PC-9 (cell line): ENCODE measurements at regions of chr15 and their contacts with region 1.

Region 1: DNA sequence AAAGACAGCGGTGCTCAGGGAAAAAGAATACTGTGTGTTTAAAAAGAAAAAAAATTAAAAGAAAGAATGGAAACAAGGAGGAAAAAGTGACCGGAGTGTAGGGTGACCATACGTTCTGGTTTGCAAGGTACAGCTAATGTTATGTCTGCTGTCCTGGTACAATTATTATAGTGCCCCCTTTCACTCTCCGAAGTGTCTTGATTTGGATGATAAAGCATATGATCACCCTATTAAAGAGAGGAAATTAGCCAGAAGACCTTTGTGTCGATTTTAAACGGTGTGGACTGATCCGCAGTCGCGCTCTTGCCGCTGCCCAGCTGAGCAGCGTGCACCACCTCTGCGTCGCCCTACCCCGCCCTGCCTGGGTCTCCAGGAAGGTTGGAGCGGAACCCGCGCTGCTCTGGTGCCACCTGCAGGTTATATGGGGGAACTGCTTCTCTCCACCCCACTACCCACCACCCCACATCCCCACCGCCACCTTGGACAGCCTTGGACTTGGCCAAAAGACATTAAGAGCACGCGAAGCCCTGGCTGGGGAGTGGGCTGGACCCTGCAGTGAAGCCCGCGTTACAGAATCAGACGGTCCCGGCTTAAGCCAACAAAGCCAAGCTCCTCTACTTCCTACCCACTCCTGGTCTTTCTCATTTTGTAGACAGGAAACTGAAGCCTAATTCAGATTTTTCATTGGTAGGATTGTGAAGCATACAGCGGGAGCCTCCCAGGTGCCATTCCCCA is 41.2 kb upstream of the UBE2Q2 start:
- DNase-seq: peak in 1 of 2 experiments; percentile 78
- H3K4me3 ChIP-seq: peak overlapping the region; percentile 23; the same call in 1 of the 2 replicates
- H3K27ac ChIP-seq: no peak overlapping the region
- H3K4me1 ChIP-seq: peaks cover 5% of the 10 kb centered on the region; the same call in 1 of the 2 replicates
- H3K27me3 ChIP-seq: peaks cover 30% of the 10 kb centered on the region
- CTCF ChIP-seq: peak; percentile 82

Region 2: GRCh38 chr15:74873036-74873755 is 928.8 kb before region 1 on chr15 and contains the start of gene SCAMP2:
- CTCF ChIA-PET with region 1: interaction called, 10 read pairs
- POLR2A ChIA-PET with region 1: no interaction called
- intact Hi-C with region 1: no loop called
- DNase-seq: peak; percentile 85 to 89
- H3K4me3 ChIP-seq: peak within 1 kb of the TSS; percentile 98
- H3K27ac ChIP-seq: peak within 1 kb of the TSS; percentile 83
- H3K4me1 ChIP-seq: peaks cover 39% of the 10 kb centered on the region
- H3K27me3 ChIP-seq: no peaks in the 10 kb centered on the region
- CTCF ChIP-seq: no peak
- total RNA-seq, gene SCAMP2: 84.6 and 87.4 TPM in 2 replicates

Region 3: GRCh38 chr15:75732809-75733451 is 69.1 kb before region 1 on chr15:
- CTCF ChIA-PET with region 1: interaction called, 5 read pairs
- POLR2A ChIA-PET with region 1: no interaction called
- intact Hi-C with region 1: loop called (anchors 2 kb)
- DNase-seq: peak in 1 of 2 experiments; percentile 71
- H3K4me3 ChIP-seq: no peak overlapping the region
- H3K27ac ChIP-seq: no peak overlapping the region
- H3K4me1 ChIP-seq: no peaks in the 10 kb centered on the region
- H3K27me3 ChIP-seq: no peaks in the 10 kb centered on the region
- CTCF ChIP-seq: peak; percentile 85

Region 4: GRCh38 chr15:76024021-76024768 is 222.2 kb after region 1 on chr15:
- CTCF ChIA-PET with region 1: no interaction called
- POLR2A ChIA-PET with region 1: no interaction called
- intact Hi-C with region 1: no loop called
- DNase-seq: no peak
- H3K4me3 ChIP-seq: no peak overlapping the region
- H3K27ac ChIP-seq: no peak overlapping the region
- H3K4me1 ChIP-seq: no peaks in the 10 kb centered on the region
- H3K27me3 ChIP-seq: no peaks in the 10 kb centered on the region
- CTCF ChIP-seq: no peak